CD4-positive, alpha-beta memory T cell (primary cell): ENCODE measurements at regions of chr1 and their contacts with region 1.

Region 1: GRCh38 chr1:25608488-25609178 is 8.0 kb upstream of the MAN1C1 start:
- DNase-seq: peak; percentile 81 to 90 (median 84)
- H3K4me3 ChIP-seq: peak overlapping the region in 1 of 2 donors; percentile 32
- H3K4me3 Mint-ChIP-seq: peak overlapping the region in 7 of 8 donors; percentile 17 to 73 (median 30)
- H3K27ac ChIP-seq: no peak overlapping the region
- H3K27ac Mint-ChIP-seq: peak overlapping the region in 5 of 7 donors; percentile 10 to 92 (median 61)
- H3K4me1 ChIP-seq: peaks cover 8% of the 10 kb centered on the region
- H3K4me1 Mint-ChIP-seq: peaks cover 10 to 13% (median 12%) of the 10 kb centered on the region in 4 donors
- H3K27me3 ChIP-seq: no peaks in the 10 kb centered on the region
- H3K27me3 Mint-ChIP-seq: peaks cover 0 to 2% of the 10 kb centered on the region in 2 donors

Region 2: DNA sequence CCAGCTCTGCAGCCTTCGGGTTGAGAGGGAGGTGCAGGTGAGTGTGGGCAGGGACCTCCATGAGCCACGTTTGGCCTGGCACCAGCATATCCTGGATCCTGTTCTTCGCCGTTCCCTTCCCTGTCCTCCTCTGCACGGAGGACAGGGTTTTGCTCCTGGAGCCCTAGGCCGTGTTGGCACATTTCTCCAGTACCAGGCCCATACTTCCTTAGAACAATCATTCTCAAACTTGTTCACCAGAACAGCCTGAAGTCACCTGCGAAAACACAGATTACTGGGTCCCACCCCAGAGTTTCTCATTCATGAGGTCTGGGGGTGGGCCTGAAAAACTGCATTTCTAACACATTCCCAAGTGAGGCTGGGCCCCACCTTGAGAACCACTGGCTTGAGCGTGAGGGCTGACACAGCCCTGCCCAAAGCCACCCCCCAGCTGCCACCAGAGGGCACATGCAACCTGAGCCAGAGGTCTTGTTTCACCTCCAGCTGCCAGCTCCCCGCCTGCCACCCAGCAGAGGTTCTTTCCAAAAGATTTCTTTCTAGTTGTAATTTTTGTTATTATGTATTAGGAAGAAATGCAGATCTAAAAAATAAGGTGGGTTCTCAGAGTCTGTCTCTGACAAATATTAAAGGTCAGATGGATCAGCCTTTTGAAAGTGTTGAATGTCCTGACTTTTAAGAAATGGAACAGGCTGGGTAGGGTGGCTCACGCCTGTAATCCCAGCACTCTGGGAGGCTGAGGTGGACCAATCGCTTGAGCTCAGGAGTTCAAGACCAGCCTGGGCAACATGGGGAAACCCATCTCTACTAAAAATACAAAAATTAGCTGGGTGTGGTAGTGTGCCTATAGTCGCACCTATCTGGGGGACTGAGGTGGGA is 104.8 kb before region 1 on chr1:
- CTCF ChIA-PET with region 1: interaction called, 9 read pairs
- POLR2A ChIA-PET with region 1: interaction called, 3 read pairs
- intact Hi-C with region 1: loop called (anchors 5 kb)
- DNase-seq: peak; percentile 68 to 74 (median 70)
- H3K4me3 ChIP-seq: no peak overlapping the region
- H3K4me3 Mint-ChIP-seq: no peak overlapping the region
- H3K27ac ChIP-seq: no peak overlapping the region
- H3K27ac Mint-ChIP-seq: peak overlapping the region in 4 of 7 donors; percentile 6 to 55 (median 40)
- H3K4me1 ChIP-seq: peaks cover 23% of the 10 kb centered on the region
- H3K4me1 Mint-ChIP-seq: peaks cover 10 to 29% (median 19%) of the 10 kb centered on the region in 4 donors
- H3K27me3 ChIP-seq: no peaks in the 10 kb centered on the region
- H3K27me3 Mint-ChIP-seq: no peaks in the 10 kb centered on the region

Region 3: DNA sequence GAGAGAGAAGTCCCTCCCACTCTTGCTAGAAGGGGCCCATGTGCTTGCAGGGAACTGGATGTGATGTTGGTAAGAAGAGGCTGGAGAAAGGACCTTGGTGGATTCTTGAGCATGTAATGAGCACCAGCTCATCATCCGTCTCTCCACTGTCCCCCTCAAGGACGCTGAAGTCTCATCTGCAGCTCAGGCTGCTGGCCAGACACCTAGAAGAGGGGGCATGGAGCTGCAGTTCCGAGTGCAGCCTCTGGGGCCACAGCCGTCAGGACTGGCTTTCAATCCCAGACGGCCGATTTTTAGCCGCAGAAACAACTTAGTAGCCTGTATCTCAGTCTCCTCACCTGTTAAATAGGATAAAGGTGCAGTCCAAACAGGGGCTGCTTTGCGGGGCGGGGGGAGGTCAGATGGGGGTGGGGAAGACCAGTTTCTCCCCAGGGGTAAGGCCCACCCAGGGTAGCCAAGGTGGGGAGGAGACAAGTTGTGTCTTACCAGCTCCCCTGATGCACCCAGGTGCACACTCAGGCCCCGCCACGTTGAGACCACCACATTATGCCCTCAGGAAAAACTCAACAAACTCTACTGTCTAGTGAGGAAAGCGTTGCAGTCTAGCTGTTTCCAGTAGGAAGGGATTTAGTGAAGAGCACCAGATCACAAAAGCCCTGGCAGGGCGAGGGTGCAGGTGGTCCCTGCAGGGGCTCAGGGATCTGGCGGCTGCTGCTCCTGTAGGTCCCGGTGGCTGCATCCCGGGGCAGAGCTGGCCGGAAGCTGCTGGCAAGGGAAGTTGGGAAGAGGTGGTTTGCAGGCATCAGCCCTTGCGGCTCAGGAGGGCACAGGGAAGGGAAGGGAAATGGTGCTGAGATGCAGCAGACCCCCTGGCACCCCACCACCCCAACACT is 35.7 kb before region 1 on chr1:
- CTCF ChIA-PET with region 1: interaction called, 9 read pairs
- POLR2A ChIA-PET with region 1: interaction called, 15 read pairs
- intact Hi-C with region 1: no loop called
- DNase-seq: peak in 4 of 5 donors; percentile 29 to 41 (median 36)
- H3K4me3 ChIP-seq: no peak overlapping the region
- H3K4me3 Mint-ChIP-seq: no peak overlapping the region
- H3K27ac ChIP-seq: no peak overlapping the region
- H3K27ac Mint-ChIP-seq: peak overlapping the region in 6 of 7 donors; percentile 27 to 77 (median 68)
- H3K4me1 ChIP-seq: peaks cover 31% of the 10 kb centered on the region
- H3K4me1 Mint-ChIP-seq: peaks cover 10 to 57% (median 30%) of the 10 kb centered on the region in 4 donors
- H3K27me3 ChIP-seq: no peaks in the 10 kb centered on the region
- H3K27me3 Mint-ChIP-seq: no peaks in the 10 kb centered on the region

Region 4: GRCh38 chr1:25658791-25659431 is 50.3 kb after region 1 on chr1:
- CTCF ChIA-PET with region 1: no interaction called
- POLR2A ChIA-PET with region 1: no interaction called
- intact Hi-C with region 1: no loop called
- DNase-seq: no peak
- H3K4me3 ChIP-seq: no peak overlapping the region
- H3K4me3 Mint-ChIP-seq: no peak overlapping the region
- H3K27ac ChIP-seq: no peak overlapping the region
- H3K27ac Mint-ChIP-seq: peak overlapping the region in 4 of 7 donors; percentile 14 to 52 (median 34)
- H3K4me1 ChIP-seq: no peaks in the 10 kb centered on the region
- H3K4me1 Mint-ChIP-seq: peaks cover 7 to 38% (median 17%) of the 10 kb centered on the region in 4 donors
- H3K27me3 ChIP-seq: no peaks in the 10 kb centered on the region
- H3K27me3 Mint-ChIP-seq: no peaks in the 10 kb centered on the region

Region 5: DNA sequence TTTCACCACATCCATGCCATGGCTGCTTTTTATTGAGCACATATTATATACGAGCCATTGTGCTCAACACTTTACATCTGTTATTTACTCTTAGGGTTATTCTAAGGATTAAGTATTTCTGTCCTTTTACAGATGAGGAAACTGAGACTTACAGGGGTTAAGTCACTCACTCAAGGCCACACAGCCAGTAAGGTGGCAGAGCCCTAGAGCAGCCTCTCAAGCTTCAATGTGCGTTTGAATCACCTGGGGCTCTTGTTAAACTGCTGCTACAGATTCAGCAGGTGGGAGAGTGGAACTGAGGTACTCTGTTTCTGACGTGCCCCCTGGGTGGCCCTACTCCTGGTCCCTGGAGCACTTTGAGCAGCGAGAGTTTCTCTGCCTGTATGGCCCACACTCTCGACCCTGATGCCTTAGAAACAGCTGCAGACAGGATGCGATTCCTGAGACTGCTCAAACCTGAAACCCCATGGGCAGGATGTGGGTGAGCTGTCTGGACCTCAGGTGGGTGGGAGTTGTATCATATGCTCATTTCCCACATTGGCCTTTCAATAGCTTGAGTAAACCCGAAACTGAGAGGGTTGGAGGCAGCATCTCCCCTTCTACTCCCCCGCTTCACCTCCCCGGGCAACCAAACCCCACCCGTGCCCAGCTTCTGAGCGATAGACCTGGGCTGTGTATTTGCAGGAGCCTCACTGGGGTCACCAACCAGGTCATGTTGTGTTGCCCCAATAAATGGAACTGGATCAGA is 67.3 kb after region 1 on chr1:
- CTCF ChIA-PET with region 1: interaction called, 11 read pairs
- POLR2A ChIA-PET with region 1: interaction called, 5 read pairs
- intact Hi-C with region 1: no loop called
- DNase-seq: peak; percentile 74 to 83 (median 78)
- H3K4me3 ChIP-seq: peak overlapping the region in 1 of 2 donors; percentile 18
- H3K4me3 Mint-ChIP-seq: peak overlapping the region; percentile 74 to 89 (median 85)
- H3K27ac ChIP-seq: no peak overlapping the region
- H3K27ac Mint-ChIP-seq: peak overlapping the region; percentile 85 to 95 (median 92)
- H3K4me1 ChIP-seq: peaks cover 71% of the 10 kb centered on the region
- H3K4me1 Mint-ChIP-seq: peaks cover 66 to 88% (median 77%) of the 10 kb centered on the region in 4 donors
- H3K27me3 ChIP-seq: no peaks in the 10 kb centered on the region
- H3K27me3 Mint-ChIP-seq: no peaks in the 10 kb centered on the region

Region 6: DNA sequence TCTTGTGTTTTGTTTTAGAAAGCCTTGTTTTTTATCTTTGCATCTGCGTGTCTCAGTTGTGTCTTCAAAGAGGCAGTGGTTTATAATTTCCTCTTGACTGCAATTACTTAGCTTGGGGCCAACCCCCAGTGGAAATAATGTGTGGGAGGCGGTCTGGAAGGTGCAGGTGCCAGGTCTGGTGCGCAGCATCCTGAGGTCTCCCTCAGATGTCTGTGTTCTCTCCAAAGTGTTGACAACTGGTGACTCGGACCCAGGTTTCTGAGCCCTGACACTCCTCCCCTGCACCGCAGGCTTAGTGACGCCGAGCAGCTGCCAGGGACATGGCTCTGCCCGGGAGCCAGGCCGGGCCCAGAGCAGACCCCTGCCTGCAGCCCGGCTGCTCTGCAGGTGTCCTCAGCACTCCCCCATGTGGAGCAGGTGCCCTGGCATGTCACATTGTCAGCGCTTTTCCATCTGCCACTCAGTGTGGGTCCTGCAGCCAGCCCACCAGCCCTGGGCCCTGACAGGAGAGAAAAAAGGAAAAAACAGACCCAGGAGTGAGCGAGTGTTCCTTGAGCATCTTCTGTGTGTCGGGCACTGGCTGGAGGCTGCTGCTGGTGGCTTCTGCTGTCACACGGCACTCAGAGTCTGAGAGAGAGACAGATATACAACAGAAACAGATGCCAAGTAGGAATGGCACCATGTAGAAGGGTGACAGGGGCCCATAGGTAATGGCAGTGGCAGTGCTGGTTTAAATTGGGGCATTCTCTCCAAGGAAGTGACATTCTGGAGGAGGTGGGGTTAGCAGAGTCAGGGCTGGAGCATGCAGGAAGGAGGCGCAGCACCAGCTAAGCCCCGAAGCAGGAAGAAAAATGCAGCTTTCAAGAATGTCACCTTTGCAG is 166.5 kb after region 1 on chr1:
- CTCF ChIA-PET with region 1: interaction called, 14 read pairs
- POLR2A ChIA-PET with region 1: interaction called, 12 read pairs
- intact Hi-C with region 1: loop called (anchors 1 kb)
- DNase-seq: peak; percentile 89 to 97 (median 91)
- H3K4me3 ChIP-seq: peak overlapping the region; percentile 8 to 47
- H3K4me3 Mint-ChIP-seq: peak overlapping the region; percentile 66 to 90 (median 82)
- H3K27ac ChIP-seq: peak overlapping the region; percentile 45
- H3K27ac Mint-ChIP-seq: peak overlapping the region; percentile 90 to 99 (median 93)
- H3K4me1 ChIP-seq: peaks cover 64% of the 10 kb centered on the region
- H3K4me1 Mint-ChIP-seq: peaks cover 48 to 73% (median 51%) of the 10 kb centered on the region in 4 donors
- H3K27me3 ChIP-seq: no peaks in the 10 kb centered on the region
- H3K27me3 Mint-ChIP-seq: no peaks in the 10 kb centered on the region

Region 7: GRCh38 chr1:25796811-25797458 is 188.3 kb after region 1 on chr1:
- CTCF ChIA-PET with region 1: interaction called, 218 read pairs
- POLR2A ChIA-PET with region 1: interaction called, 37 read pairs
- intact Hi-C with region 1: loop called (anchors 1 kb)
- DNase-seq: peak; percentile 78 to 87 (median 81)
- H3K4me3 ChIP-seq: peak overlapping the region in 1 of 2 donors; percentile 44
- H3K4me3 Mint-ChIP-seq: peak overlapping the region; percentile 58 to 88 (median 80)
- H3K27ac ChIP-seq: peak overlapping the region; percentile 45
- H3K27ac Mint-ChIP-seq: peak overlapping the region; percentile 86 to 98 (median 95)
- H3K4me1 ChIP-seq: peaks cover 54% of the 10 kb centered on the region
- H3K4me1 Mint-ChIP-seq: peaks cover 32 to 66% (median 49%) of the 10 kb centered on the region in 4 donors
- H3K27me3 ChIP-seq: no peaks in the 10 kb centered on the region
- H3K27me3 Mint-ChIP-seq: peaks cover 0 to 2% of the 10 kb centered on the region in 2 donors

Region 8: DNA sequence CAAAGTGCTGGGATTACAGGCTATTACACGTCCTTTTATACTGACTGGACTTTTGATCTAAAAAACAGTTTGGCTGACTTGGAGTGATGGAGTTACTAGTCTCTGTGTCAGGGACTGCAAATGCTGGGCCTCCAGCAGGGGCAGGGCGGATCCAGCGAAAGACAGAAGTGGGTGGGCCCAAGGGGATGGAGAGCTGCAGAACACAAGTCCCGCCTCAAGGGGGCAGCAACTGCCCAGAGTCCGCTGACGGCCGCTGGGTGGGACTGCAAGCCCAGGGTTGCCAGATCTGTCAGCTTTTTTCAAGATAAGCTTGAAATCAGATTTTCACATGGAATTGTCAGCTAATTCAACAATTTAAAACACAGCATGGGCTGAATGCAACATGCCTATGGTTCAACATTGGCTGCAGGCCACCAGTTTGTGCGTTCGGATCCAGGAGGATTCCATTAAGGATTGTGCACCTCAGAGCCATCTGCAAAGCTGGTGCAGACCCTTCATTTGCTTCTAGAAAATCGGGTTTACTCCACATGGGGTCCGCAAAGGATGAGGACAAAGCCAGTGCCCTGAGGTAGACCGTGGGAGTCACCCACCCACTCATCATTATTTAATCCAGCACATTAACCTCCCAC is 286.8 kb after region 1 on chr1:
- CTCF ChIA-PET with region 1: interaction called, 11 read pairs
- POLR2A ChIA-PET with region 1: no interaction called
- intact Hi-C with region 1: no loop called
- DNase-seq: peak; percentile 89 to 92 (median 91)
- H3K4me3 ChIP-seq: no peak overlapping the region
- H3K4me3 Mint-ChIP-seq: peak overlapping the region in 1 of 8 donors; percentile 23
- H3K27ac ChIP-seq: no peak overlapping the region
- H3K27ac Mint-ChIP-seq: peak overlapping the region in 6 of 7 donors; percentile 4 to 73 (median 58)
- H3K4me1 ChIP-seq: peaks cover 10% of the 10 kb centered on the region
- H3K4me1 Mint-ChIP-seq: peaks cover 4 to 9% (median 7%) of the 10 kb centered on the region in 4 donors
- H3K27me3 ChIP-seq: no peaks in the 10 kb centered on the region
- H3K27me3 Mint-ChIP-seq: no peaks in the 10 kb centered on the region